ENCODE measurements at regions of chr4 and their contacts with region 1.

Region 1: GRCh38 chr4:1346781-1347409 is at the start of gene UVSSA:
- DNase-seq: peak; percentile 100
- H3K4me3 Mint-ChIP-seq: peak within 1 kb of the TSS; percentile 94
- H3K27ac Mint-ChIP-seq: peak within 1 kb of the TSS; percentile 95
- H3K4me1 Mint-ChIP-seq: peaks cover 45% of the 10 kb centered on the region
- H3K27me3 Mint-ChIP-seq: no peaks in the 10 kb centered on the region
- total RNA-seq, gene UVSSA: 22.2 to 22.3 TPM

Region 2: GRCh38 chr4:1130316-1131186 is 216.3 kb before region 1 on chr4:
- CTCF ChIA-PET with region 1: interaction called, 25 read pairs
- POLR2A ChIA-PET with region 1: interaction called, 5 read pairs
- DNase-seq: peak; percentile 81
- H3K4me3 Mint-ChIP-seq: no peak overlapping the region
- H3K27ac Mint-ChIP-seq: no peak overlapping the region
- H3K4me1 Mint-ChIP-seq: peaks cover 3% of the 10 kb centered on the region
- H3K27me3 Mint-ChIP-seq: peaks cover 19% of the 10 kb centered on the region

Region 3: GRCh38 chr4:1200425-1201035 is 146.4 kb before region 1 on chr4:
- CTCF ChIA-PET with region 1: no interaction called
- POLR2A ChIA-PET with region 1: interaction called, 17 read pairs
- DNase-seq: peak; percentile 20
- H3K4me3 Mint-ChIP-seq: peak overlapping the region; percentile 79
- H3K27ac Mint-ChIP-seq: peak overlapping the region; percentile 99
- H3K4me1 Mint-ChIP-seq: peaks cover 60% of the 10 kb centered on the region
- H3K27me3 Mint-ChIP-seq: no peaks in the 10 kb centered on the region

Region 4: DNA sequence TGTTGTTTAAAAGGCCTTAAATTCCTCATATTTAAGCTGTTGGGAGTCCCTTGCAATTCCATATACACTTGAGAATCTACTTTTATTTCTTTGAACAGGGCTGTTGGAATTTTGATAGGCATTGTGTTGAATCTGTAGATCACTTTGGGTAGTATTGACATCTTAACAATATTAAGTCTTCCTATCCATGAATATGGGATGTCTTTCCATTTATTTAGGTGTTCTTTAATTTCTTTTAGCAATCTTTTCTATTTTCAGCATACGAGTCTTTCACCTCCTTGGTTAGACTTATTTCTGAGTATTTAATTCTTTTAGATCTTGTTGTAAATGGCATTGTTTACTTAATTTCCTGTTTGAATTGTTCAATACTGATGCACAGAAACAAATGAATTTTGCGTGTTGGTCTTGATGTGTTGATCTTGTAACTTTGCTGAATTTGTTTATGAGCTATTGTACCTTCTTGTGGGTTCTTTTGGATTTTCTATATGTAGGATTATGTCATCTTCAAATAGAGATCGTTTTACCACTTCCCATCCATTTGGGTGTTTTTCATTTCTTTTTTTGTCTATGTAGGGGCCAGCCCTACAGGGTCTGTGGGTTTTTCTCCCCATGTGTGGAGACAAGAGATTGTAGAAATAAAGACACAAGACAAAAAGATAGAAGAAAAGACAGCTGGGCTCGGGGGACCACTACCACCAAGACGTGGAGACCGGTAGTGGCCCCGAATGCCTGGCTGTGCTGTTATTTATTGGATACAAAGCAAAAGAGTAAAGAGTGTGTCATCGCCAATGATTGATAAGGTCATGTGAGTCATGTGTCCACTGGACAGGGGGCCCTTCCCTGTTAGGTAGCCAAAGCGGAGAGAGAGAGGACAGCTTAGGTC is 79.8 kb before region 1 on chr4:
- CTCF ChIA-PET with region 1: interaction called, 20 read pairs
- POLR2A ChIA-PET with region 1: interaction called, 10 read pairs
- DNase-seq: no peak
- H3K4me3 Mint-ChIP-seq: peak overlapping the region; percentile 65
- H3K27ac Mint-ChIP-seq: peak overlapping the region; percentile 80
- H3K4me1 Mint-ChIP-seq: peaks cover 21% of the 10 kb centered on the region
- H3K27me3 Mint-ChIP-seq: no peaks in the 10 kb centered on the region

Region 5: DNA sequence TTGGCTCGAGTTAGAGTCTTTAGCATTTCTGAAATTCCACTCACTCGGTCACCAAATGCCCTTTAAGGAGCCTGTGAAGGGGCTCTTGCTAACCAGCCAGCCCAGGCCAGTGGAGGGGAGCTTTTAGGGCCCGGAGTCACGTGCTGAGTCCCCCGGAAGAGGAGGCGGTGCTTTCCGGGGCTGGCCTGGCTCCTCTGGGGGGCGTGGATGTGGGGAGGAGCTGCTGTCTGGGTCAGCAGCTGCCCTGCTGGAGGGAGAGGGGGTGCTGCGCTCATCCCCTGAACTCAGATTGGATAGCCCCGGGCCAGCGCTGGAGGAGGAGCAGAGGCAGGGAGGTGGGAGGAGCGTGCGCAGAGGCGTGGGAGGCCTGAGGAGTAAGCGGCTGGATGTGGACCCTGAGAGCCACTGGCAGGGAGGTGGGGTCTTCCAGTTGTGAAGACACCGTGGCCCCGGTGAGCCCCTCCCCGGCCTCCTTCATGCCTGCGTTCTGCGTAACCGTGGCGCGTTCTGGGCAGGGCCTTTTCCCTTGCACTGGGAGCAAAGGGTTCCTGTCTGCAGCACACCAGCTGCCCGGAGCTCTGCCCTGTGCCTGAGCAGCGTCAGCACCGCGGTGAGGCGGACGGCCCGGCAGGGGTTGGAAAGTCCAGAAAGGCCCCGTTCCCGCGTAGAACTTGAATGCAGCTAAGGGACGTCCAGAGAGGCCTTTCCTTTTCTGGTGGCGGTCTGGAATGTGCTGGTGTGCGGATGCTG is 37.5 kb before region 1 on chr4:
- CTCF ChIA-PET with region 1: interaction called, 16 read pairs
- POLR2A ChIA-PET with region 1: interaction called, 29 read pairs
- DNase-seq: peak; percentile 59
- H3K4me3 Mint-ChIP-seq: peak overlapping the region; percentile 45
- H3K27ac Mint-ChIP-seq: peak overlapping the region; percentile 60
- H3K4me1 Mint-ChIP-seq: peaks cover 72% of the 10 kb centered on the region
- H3K27me3 Mint-ChIP-seq: no peaks in the 10 kb centered on the region

Region 6: GRCh38 chr4:1463088-1463926 is 116.4 kb after region 1 on chr4:
- CTCF ChIA-PET with region 1: no interaction called
- POLR2A ChIA-PET with region 1: no interaction called
- DNase-seq: no peak
- H3K4me3 Mint-ChIP-seq: no peak overlapping the region
- H3K27ac Mint-ChIP-seq: no peak overlapping the region
- H3K4me1 Mint-ChIP-seq: no peaks in the 10 kb centered on the region
- H3K27me3 Mint-ChIP-seq: peaks cover 8% of the 10 kb centered on the region

Region 7: DNA sequence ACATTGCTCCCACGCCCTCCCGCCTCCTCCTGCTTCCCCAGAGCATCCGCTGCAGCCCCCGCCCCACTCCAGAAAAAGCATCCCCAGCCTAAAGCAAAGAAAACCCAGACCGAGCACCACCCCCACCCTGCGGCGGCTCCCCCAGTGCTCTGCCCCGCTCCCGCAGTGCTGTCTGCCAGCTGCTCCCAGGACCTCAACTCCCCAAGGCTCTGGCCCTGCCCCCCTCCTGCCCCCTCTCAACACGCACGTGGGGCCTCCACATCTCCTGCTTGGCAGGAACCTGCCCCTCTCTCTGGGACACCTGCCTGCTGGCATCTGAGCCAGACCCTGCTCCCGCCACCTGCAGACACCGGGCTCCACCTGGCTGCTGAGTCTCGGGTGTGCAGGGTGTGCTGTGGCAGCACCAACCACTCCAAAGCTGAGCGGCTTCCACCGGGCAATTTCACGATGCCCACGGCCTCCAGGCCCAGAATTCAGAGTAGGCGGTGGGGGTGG is 257.9 kb after region 1 on chr4:
- CTCF ChIA-PET with region 1: no interaction called
- POLR2A ChIA-PET with region 1: interaction called, 10 read pairs
- DNase-seq: peak; percentile 57
- H3K4me3 Mint-ChIP-seq: peak overlapping the region; percentile 39
- H3K27ac Mint-ChIP-seq: peak overlapping the region; percentile 88
- H3K4me1 Mint-ChIP-seq: peaks cover 18% of the 10 kb centered on the region
- H3K27me3 Mint-ChIP-seq: no peaks in the 10 kb centered on the region

Measured in activated CD4-positive, alpha-beta memory T cell treated with anti-CD3 and anti-CD28 coated beads, Interleukin-2, amount 10 ng/mL, durations not matched to agents 7 days and 5 days (primary cell).